Right cardiac atrium (tissue), 5 donors: ENCODE measurements at regions of chr13 and their contacts with region 1.

Region 1: DNA sequence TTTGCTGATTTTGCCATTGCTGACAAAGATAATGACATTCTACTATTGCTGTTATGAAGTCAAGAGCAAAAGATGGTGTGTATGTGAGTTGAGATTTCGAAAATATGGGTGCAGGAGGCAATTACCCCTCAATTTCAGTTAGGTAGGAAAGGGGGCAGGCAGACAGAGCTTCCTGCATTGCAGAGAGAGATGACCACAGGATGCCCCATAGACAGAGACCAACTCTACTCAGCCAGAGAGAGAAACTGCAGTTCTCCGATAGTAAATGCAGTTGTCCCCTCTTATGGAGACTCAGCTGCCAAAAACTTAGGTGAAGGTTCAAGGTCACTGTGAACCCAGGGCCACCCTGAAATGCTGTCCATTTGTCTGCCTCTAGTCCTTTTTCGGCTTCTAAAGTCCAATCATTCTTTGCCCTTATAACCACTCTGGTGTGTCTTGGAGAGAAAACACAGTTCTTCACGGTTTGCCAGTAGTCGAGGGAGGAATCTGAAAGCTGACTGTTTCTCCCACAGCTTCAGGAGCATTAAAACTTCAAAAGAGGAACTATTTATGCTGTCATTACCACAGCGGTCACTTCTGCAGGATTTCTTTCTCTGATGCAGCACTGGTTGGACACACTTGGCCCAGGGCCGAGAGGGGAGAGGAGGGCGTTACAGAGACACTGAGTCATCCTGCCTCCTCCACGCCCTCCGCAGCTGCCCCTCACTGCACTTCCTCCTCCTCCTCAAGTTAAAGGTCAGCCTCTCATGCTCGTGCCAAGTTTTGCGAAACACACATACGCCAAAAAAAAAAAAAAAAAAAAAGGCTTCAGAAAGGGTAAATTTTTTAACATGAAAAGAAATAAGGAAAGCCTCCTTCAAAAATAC is 264.3 kb downstream of the FOXO1 start:
- DNase-seq: peak; percentile 98 to 99 (median 99)
- ATAC-seq: peak; percentile 97
- H3K4me3 ChIP-seq: no peak overlapping the region
- H3K27ac ChIP-seq: peak overlapping the region; percentile 73
- H3K4me1 ChIP-seq: peaks cover 9% of the 10 kb centered on the region
- H3K27me3 ChIP-seq: no peaks in the 10 kb centered on the region

Region 2: GRCh38 chr13:40146611-40147117 is 255.5 kb before region 1 on chr13:
- intact Hi-C with region 1: no loop called
- DNase-seq: no peak
- ATAC-seq: no peak
- H3K4me3 ChIP-seq: no peak overlapping the region
- H3K27ac ChIP-seq: no peak overlapping the region
- H3K4me1 ChIP-seq: peaks cover 2% of the 10 kb centered on the region
- H3K27me3 ChIP-seq: no peaks in the 10 kb centered on the region

Region 3: DNA sequence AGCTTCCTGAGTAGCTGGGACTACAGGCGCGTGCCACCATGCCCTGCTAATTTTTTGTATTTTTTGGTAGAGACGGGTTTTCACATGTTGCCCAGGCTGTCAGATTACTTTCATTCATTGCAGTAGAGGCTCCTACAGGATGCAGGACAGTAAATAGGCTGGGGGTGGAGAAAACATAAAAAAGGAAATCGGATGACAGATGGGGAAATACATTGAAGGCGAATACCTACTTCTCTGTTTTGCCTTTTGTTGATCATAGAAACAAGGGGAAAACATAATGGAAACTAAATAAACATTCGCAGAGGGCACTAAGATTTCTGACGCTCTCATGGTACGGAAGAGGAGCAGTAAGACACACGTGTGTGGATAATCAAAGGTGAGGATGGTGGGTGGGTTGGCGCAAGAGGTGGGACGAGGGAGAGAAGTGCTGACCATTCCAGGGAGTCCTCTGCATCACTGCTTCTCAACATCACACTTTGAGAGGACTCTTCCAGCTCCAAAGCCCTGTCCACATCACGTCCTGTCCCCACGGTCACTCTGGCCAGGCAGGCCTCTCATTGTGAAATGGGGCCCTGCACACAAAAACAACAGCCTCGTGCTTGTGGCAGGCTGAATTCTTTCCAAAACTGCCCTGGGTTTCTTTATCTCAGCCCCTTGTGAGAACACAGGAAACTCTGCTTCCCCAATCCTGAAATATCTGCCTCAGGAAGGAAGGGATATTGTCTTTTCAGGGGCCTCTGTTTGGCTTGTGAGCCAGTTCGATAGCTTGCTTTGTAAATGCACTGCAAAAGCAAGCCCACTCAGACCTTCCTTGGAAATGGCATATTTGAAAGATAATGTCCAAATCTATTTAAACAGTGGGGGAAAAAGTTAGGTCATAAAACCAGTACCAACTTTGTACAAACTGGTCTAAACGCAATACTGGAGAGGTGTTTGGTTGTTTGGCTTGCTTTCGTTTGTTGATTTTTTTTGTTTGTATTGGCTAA is 75.8 kb after region 1 on chr13:
- intact Hi-C with region 1: loop called in 1 of 4 experiments (anchors 10 kb)
- DNase-seq: peak; percentile 74 to 88 (median 87)
- ATAC-seq: peak; percentile 89
- H3K4me3 ChIP-seq: no peak overlapping the region
- H3K27ac ChIP-seq: peak overlapping the region; percentile 74
- H3K4me1 ChIP-seq: peaks cover 20% of the 10 kb centered on the region
- H3K27me3 ChIP-seq: no peaks in the 10 kb centered on the region

Region 4: DNA sequence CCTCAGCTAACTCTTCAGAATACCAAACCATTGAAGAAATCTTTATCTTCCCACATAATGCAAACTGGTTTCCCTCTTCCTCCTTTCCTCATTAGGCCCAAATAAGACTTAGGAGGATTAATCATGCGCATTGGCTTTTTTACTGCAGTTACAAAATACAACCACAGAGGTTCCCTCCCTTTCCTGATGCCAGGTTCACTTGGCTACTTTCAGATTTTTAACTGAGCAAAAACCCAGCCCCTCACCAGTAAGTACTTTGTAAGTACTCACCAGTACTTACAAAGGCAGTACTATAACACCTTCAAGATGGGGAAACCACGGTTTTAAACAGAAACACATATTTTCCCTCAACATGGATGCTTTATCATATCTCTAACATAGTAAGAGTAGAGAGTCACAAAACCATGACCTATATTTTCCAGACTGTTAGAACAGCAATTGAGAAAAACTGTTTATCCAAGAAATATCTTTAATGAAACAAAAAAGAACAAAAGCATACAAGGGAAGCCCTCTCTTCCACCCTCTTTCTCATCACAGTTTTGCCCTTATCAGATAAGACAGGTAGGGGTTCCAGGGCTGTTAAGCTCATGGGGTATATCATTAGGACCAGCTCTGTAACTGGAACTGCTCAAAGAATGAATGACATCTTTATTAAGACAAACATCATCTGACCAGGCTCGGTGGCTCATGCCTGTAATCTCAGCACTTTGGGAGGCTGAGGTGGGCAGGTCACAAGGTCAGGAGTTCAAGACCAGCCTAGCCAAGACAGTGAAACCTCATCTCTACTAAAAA is 251.6 kb after region 1 on chr13:
- intact Hi-C with region 1: no loop called
- DNase-seq: no peak
- ATAC-seq: peak in 1 of 2 donors; percentile 29
- H3K4me3 ChIP-seq: no peak overlapping the region
- H3K27ac ChIP-seq: no peak overlapping the region
- H3K4me1 ChIP-seq: peaks cover 17% of the 10 kb centered on the region
- H3K27me3 ChIP-seq: no peaks in the 10 kb centered on the region